ENCODE measurements at regions of chr18 and their contacts with region 1.

Region 1: DNA sequence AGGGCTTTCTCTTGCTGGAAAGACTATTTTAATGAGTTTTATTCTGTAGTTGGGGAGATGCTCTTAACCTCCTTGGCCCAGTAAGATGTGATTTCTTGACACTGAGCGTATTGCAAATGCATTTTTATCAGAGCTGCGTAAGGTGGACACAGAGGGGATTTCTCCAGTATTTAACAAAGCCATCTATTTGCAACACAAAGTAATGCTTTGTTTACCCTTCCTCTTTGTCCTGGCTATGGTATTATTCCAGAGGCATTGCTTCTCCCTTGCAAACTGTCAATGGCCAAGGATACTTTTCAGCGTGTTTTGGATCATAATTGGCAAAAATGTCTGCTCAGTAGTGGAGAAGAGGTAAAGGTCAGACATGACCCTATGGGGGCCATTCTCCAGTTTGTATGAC is 90.8 kb upstream of the PIK3C3 start:
- DNase-seq: no peak
- ATAC-seq: no peak
- H3K4me3 ChIP-seq: no peak overlapping the region
- H3K27ac ChIP-seq: no peak overlapping the region
- H3K4me1 ChIP-seq: no peaks in the 10 kb centered on the region
- H3K27me3 ChIP-seq: no peaks in the 10 kb centered on the region
- CTCF ChIP-seq: no peak

Region 2: DNA sequence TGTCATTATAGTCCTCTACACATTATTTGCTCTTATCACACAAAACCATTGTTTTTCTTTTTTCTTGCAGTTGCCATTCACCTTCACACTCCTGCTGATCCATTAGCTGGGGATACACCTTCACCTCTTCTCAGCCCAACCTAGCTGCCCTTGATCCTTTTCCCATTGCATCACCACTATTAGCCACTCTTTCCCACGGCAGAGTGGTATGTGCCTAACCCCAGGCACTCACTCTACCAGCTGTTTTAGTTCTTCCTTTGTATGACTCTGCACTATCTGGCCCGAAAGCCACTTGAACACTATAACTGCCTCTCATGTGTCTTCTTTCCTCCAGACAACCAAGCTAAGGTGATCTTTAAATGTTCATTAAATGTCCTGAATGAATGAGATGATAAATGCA is 54.6 kb before region 1 on chr18:
- intact Hi-C with region 1: loop called in 1 of 3 experiments (anchors 10 kb)
- DNase-seq: no peak
- ATAC-seq: no peak
- H3K4me3 ChIP-seq: no peak overlapping the region
- H3K27ac ChIP-seq: no peak overlapping the region
- H3K4me1 ChIP-seq: no peaks in the 10 kb centered on the region
- H3K27me3 ChIP-seq: no peaks in the 10 kb centered on the region
- CTCF ChIP-seq: no peak

Region 3: GRCh38 chr18:41938445-41938844 is 74.2 kb after region 1 on chr18:
- intact Hi-C with region 1: no loop called
- DNase-seq: no peak
- ATAC-seq: no peak
- H3K4me3 ChIP-seq: no peak overlapping the region
- H3K27ac ChIP-seq: no peak overlapping the region
- H3K4me1 ChIP-seq: no peaks in the 10 kb centered on the region
- H3K27me3 ChIP-seq: peaks cover 0 to 3% (median 0%) of the 10 kb centered on the region in 4 donors
- CTCF ChIP-seq: no peak

Region 4: DNA sequence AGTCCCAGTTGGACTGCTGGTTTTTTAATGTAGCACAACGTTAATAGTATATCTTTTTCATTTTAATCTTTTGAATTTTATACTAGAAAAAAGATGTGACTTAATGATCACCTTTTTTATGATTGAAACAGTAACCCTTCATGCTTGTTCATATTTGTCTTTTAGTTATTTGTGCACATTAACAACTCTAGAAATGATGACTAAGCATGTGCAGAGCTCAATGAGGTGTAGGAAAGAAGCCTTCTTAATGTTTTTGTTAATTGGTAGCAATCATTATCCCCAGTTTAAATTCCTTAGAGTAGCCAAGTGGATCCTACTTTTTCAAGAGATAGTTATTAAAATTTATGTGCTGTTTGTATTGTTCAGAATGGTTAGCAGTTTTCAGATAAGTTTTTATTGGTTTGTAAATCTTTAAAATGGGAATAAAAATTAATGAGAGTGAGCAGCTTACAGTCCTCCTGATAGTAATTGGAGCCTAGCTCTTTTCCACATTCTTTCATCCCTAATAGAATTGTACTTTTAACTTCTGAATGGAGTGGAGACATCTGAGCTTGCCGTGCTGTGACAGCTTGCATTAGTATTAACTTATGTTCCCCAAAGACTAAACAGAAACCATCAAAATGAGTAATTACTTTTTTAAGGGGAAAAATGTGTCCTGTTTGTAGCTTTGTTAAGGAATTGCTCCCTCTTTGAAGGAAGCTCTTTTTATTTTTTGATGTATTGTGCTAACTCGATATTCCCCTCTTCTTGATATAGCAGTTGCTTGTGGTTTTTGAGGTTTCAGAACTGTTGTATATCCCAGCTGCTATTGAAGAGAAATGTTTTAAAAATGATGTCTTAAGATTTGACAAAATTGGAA is 108.1 kb after region 1 on chr18:
- intact Hi-C with region 1: no loop called
- DNase-seq: no peak
- ATAC-seq: no peak
- H3K4me3 ChIP-seq: no peak overlapping the region
- H3K27ac ChIP-seq: no peak overlapping the region
- H3K4me1 ChIP-seq: peaks cover 0 to 6% (median 0%) of the 10 kb centered on the region in 3 donors
- H3K27me3 ChIP-seq: no peaks in the 10 kb centered on the region
- CTCF ChIP-seq: no peak

Region 5: GRCh38 chr18:42064109-42064508 is 199.9 kb after region 1 on chr18:
- intact Hi-C with region 1: no loop called
- DNase-seq: no peak
- ATAC-seq: no peak
- H3K4me3 ChIP-seq: no peak overlapping the region
- H3K27ac ChIP-seq: no peak overlapping the region
- H3K4me1 ChIP-seq: no peaks in the 10 kb centered on the region
- H3K27me3 ChIP-seq: no peaks in the 10 kb centered on the region
- CTCF ChIP-seq: no peak